Pancreas (tissue), 10 donors: ENCODE measurements at regions of chr6 and their contacts with region 1.

Region 1: GRCh38 chr6:39302669-39303424 is 11.4 kb downstream of the KCNK17 start:
- DNase-seq: peak; percentile 70 to 95 (median 87)
- ATAC-seq: peak; percentile 91 to 99 (median 98)
- H3K4me3 ChIP-seq: peak overlapping the region in 1 of 4 donors; percentile 5
- H3K27ac ChIP-seq: no peak overlapping the region
- H3K4me1 ChIP-seq: no peaks in the 10 kb centered on the region
- H3K27me3 ChIP-seq: no peaks in the 10 kb centered on the region
- CTCF ChIP-seq: peak; percentile 80 to 92 (median 82)

Region 2: DNA sequence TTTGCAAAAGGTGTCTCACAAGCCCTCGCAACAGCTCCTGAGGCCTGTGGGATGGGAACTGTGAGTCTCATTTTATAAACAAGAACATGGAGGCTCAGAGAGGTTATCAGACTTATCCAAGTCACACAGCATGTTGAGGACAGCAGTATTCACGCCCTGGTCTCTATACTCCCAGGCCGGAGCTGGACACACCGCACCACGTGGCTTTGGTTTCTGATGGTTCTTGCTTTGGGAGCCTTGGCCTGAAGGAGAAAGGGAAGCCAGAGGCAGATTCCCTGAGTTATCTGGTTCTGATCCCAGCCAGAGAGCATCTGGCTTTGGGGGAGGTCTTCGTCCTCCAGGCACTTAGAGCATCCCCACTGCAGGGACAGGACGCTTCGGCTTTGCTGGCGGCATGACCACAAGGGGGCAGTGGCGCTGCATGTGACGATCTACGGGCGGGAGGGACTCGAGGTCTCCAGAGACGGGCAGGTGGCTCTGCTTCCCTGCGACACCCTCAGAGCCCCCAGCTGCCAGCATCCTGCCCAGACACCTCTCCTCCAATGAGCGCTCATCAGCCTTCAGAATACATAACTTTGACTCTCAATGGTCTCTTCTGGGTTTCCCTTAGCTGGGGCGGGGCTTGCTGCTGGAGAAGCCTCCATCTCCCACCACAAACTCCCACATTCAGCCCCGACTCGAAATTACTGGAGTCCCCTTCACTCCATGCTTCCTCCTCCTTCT is 136.5 kb before region 1 on chr6:
- intact Hi-C with region 1: loop called (anchors 2 to 10 kb)
- DNase-seq: peak; percentile 68 to 98 (median 88)
- ATAC-seq: peak; percentile 51 to 90 (median 77)
- H3K4me3 ChIP-seq: no peak overlapping the region
- H3K27ac ChIP-seq: no peak overlapping the region
- H3K4me1 ChIP-seq: peaks cover 3 to 12% (median 4%) of the 10 kb centered on the region in 3 donors
- H3K27me3 ChIP-seq: no peaks in the 10 kb centered on the region
- CTCF ChIP-seq: peak; percentile 84 to 91 (median 87)